ENCODE measurements at regions of chr20 and their contacts with region 1.

Region 1: GRCh38 chr20:62244644-62245108 is 6.4 kb downstream of the OSBPL2 start:
- DNase-seq: no peak
- H3K4me3 ChIP-seq: no peak overlapping the region
- H3K27ac ChIP-seq: no peak overlapping the region
- H3K4me1 ChIP-seq: peaks cover 73% of the 10 kb centered on the region
- H3K27me3 ChIP-seq: no peaks in the 10 kb centered on the region
- CTCF ChIP-seq: no peak
- POLR2A ChIP-seq: no peak

Region 2: DNA sequence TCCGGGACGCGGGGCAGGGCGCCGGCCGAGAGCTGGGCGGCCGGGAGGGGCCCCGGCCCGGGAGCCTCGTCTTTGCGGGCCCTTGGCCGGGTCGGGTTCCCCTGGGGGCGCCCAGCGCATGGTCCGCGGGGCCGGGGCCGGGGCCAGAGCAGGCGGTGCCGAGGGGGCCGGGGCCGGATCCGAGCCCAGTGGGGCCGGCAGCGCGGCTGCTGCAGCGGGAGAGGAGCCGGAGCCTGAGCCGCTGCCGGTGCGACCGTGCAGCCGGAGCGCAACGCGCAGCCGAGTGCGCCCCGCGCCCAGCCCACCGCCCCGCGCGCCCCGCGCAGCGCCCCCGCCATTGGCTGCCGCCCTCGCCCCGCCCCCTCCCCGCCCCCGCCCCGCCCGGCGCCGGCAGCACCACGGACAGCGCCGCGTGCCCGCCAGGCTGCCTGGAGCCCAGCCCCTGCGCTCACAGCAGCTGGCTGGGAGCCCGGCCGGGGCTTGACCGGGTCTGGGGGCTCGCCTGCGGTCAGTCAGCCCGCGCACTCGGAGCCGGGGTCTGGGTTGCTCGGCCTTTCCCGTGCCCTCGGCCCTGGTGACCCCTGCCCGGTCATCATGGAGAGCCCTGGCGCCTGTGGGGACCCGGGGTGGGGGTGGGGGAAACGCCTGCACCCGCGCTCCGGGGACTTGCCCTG is 24.5 kb before region 1 on chr20 and contains the start of gene HRH3:
- intact Hi-C with region 1: no loop called
- DNase-seq: no peak
- H3K4me3 ChIP-seq: peak within 1 kb of the TSS in 1 of 2 donors; percentile 42
- H3K27ac ChIP-seq: no peak within 1 kb of the TSS
- H3K4me1 ChIP-seq: peaks cover 22% of the 10 kb centered on the region
- H3K27me3 ChIP-seq: peaks cover 11% of the 10 kb centered on the region
- CTCF ChIP-seq: no peak
- POLR2A ChIP-seq: no peak
- total RNA-seq, gene HRH3: not detected

Region 3: DNA sequence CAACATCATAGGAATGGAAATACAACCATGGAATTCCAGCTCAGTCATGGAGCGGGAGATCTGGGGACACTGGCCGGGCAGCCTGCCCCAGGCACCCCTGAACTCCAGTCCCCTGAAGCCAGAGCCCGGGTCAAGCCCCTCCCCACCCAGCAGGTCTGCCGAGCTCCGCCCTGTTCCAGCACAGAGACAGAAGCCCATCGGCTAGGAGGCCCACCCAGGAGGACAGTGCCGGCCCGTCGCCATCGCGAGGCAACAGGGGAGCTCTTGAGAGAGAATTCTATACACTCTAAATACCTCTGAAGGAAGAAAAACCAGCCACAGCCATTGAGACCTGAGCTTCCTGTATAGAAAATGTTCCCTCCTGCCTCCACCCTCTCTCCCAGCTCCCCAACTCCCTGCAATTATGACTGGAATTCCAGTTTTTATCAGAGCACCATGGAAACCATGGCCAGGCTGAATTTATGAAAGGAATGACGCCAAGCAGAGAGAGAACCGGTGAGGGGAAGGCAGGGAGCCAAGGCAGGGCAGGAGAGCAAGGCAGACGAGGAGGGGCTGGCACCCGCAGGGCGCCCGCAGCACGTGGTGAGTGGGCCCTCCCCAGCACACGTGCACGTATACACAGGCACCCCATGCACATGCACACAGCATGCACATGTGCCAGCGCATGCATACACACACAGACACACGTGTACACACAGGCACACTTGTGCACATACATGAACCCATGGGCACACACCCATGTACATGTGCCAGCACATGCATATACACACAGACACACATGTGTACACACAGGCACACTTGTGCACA is 524.0 kb after region 1 on chr20:
- intact Hi-C with region 1: no loop called
- DNase-seq: no peak
- H3K4me3 ChIP-seq: no peak overlapping the region
- H3K27ac ChIP-seq: no peak overlapping the region
- H3K4me1 ChIP-seq: peaks cover 8% of the 10 kb centered on the region
- H3K27me3 ChIP-seq: no peaks in the 10 kb centered on the region
- CTCF ChIP-seq: no peak
- POLR2A ChIP-seq: no peak

Region 4: DNA sequence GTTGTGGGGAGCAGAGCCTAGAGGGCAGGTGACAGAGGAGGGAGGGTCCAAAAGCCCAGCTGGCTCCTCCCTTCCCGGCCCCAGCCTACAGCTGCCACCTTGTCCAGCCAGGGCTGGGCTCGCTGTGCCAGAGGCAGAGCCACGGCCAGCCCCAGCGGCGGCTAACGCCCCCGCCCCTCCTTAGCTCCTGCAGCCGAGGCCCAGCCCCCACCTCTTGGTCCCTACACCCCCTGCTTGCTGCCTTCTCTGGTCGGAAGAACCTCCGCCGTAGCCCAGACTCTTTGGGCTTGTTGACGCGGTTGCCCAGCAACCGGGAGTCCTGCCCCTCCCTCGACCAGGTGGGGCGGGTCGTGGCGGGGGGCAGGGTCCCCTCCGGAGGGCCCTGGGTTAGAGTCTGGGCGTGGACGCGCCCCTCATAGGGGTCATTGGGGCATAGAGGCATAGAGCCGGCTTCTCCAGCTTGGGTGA is 1840.0 kb after region 1 on chr20:
- intact Hi-C with region 1: loop called (anchors 5 kb)
- DNase-seq: no peak
- H3K4me3 ChIP-seq: no peak overlapping the region
- H3K27ac ChIP-seq: no peak overlapping the region
- H3K4me1 ChIP-seq: peaks cover 16% of the 10 kb centered on the region
- H3K27me3 ChIP-seq: no peaks in the 10 kb centered on the region
- CTCF ChIP-seq: no peak
- POLR2A ChIP-seq: no peak